Breast epithelium (tissue), 4 donors: ENCODE measurements at regions of chr4 and their contacts with region 1.

Region 1: GRCh38 chr4:4735870-4736269 is 123.6 kb upstream of the MSX1 start:
- DNase-seq: no peak
- H3K4me3 ChIP-seq: no peak overlapping the region
- H3K27ac ChIP-seq: no peak overlapping the region
- H3K4me1 ChIP-seq: no peaks in the 10 kb centered on the region
- H3K27me3 ChIP-seq: no peaks in the 10 kb centered on the region
- CTCF ChIP-seq: no peak
- POLR2A ChIP-seq: no peak

Region 2: DNA sequence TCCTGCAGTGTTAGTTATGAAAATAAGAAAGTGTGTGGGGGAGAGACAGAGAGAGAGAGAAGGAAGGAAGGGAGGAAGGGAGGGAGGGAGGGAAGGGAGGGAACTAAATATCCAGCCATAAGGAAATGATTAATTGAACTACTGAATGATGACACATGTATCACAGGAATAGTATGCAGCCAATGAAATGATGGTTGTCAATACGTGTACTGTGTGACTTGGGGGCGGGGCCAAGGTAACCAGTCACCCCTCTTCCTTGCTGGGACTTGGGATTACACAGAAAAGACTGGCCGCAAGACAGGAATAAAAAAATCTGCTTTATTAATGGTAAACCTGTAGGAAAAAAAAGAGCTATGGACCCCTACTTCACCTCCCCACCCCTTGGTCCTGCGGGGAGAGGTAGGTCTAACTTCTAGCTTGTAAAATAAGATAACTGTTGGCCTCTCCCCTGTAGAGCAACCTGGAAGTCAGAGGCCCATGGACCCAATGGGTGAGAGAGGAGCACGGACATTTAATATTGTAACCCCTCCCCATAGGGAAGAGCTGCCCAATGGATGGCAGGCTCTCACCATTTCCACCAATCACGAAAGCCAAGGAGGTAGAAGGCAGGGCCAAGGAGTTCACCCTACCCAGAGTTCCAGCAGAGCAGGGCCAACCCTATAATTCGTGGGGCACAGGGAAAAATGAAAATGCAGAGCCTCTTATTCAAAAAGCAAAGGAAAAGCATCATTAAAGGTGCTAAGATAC is 1729.1 kb after region 1 on chr4:
- intact Hi-C with region 1: loop called (anchors 5 kb)
- DNase-seq: peak in 1 of 2 donors; percentile 41
- H3K4me3 ChIP-seq: no peak overlapping the region
- H3K27ac ChIP-seq: no peak overlapping the region
- H3K4me1 ChIP-seq: no peaks in the 10 kb centered on the region
- H3K27me3 ChIP-seq: peaks cover 0 to 15% of the 10 kb centered on the region in 2 donors
- CTCF ChIP-seq: no peak
- POLR2A ChIP-seq: no peak